ENCODE measurements at regions of chr20 and their contacts with region 1.

Region 1: DNA sequence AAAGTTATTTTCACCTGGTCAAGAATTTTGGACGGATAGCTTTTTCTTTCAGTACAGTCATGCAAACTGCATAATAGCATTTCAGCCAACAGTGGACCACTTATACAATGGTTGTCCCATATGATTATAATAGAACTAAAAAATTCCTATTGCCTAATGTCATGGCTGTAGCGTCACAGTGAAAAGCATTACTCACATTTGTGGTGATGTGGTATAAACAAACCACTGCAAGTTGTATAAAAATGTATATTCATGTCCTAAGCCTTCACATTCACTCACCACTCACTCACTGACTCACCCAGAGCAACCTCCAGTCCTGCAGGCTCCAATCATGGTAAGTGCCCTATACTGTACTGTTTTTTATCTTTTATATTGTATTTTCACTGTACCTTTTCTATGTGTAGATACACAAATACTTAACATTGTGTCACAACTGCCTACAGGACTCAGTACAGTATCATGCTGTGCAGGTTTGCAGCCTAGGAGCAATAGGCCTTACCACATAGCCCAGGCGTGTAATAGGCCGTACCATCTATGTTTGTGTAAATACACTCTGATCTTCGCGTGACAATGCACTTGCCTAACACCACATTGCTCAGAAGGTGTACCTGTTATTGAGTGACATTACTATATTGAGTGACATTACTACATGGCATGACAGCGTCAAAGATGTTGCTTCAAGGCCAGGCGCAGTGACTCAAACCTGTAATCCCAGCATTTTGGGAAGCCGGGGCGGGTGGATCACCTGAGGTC is 17.9 kb downstream of the ABHD12 start:
- DNase-seq: no peak
- ATAC-seq: no peak
- H3K4me3 ChIP-seq: no peak overlapping the region
- H3K27ac ChIP-seq: no peak overlapping the region
- H3K4me1 ChIP-seq: peaks cover 3% of the 10 kb centered on the region
- H3K27me3 ChIP-seq: no peaks in the 10 kb centered on the region

Region 2: DNA sequence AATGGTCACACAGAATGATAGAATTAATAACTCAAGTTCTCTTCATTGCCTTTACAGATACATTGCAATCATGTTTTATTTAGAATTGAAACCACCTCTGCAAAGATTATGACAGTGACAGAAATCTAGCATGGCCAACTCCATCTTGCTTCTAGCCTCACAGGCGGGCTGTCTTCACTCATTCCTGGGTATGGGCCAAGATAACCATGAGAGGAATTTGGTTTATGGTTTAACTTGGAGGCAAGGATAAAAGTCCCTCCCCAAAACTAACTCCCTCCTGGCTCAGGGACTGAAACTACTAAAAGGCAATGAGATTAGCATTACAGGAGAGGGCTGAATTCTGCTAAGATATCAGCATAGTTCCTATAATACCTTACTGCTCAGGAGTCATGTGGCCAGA is 518.8 kb before region 1 on chr20:
- intact Hi-C with region 1: no loop called
- DNase-seq: no peak
- ATAC-seq: no peak
- H3K4me3 ChIP-seq: no peak overlapping the region
- H3K27ac ChIP-seq: no peak overlapping the region
- H3K4me1 ChIP-seq: no peaks in the 10 kb centered on the region
- H3K27me3 ChIP-seq: no peaks in the 10 kb centered on the region

Region 3: GRCh38 chr20:25288266-25289181 is 84.2 kb before region 1 on chr20:
- intact Hi-C with region 1: no loop called
- DNase-seq: peak; percentile 7 to 46 (median 35)
- ATAC-seq: no peak
- H3K4me3 ChIP-seq: no peak overlapping the region
- H3K27ac ChIP-seq: no peak overlapping the region
- H3K4me1 ChIP-seq: no peaks in the 10 kb centered on the region
- H3K27me3 ChIP-seq: no peaks in the 10 kb centered on the region

Region 4: DNA sequence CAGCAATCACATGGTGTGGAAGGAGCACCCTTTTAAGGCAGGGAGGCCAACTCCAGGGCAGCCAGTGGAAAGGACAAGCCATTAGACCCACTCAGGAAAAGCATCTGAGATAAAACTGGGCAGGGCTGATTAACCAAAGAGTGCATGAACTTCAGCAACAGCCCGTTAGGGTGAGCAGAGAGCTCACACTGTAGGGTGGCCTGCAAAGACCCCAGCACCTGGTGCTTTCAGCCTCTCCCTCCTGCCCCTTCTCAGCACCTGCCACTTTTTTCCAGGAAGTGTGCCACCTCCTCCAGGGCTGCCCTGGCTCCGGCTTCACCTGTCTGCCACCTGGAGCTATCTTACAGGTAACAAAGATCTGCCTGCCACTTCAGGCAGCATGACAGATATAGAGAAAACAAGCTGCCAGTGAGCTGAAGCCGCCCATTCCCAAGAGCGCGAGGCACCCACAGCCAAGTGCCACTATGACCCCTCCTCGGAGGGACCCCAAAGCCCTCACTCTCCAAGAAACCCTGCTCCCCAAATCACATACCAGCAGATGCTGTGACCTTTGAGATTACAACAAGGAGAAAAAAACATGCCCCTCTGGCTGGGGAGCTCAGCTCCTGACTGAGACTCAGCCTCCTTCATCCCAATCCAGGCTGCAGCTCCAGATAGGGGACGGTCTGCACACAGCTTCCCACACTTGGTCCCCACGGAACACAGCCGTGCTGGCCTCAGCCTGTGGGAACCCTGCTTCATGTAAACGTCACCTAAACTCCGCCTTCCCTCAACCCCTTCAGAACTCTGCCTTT is 53.3 kb before region 1 on chr20:
- intact Hi-C with region 1: loop called in 1 of 4 experiments (anchors 10 kb)
- DNase-seq: no peak
- ATAC-seq: peak in 1 of 2 donors; percentile 7
- H3K4me3 ChIP-seq: no peak overlapping the region
- H3K27ac ChIP-seq: no peak overlapping the region
- H3K4me1 ChIP-seq: peaks cover 9% of the 10 kb centered on the region
- H3K27me3 ChIP-seq: no peaks in the 10 kb centered on the region